Esophagus squamous epithelium (tissue), 5 donors: ENCODE measurements at regions of chr16 and their contacts with region 1.

Region 1: DNA sequence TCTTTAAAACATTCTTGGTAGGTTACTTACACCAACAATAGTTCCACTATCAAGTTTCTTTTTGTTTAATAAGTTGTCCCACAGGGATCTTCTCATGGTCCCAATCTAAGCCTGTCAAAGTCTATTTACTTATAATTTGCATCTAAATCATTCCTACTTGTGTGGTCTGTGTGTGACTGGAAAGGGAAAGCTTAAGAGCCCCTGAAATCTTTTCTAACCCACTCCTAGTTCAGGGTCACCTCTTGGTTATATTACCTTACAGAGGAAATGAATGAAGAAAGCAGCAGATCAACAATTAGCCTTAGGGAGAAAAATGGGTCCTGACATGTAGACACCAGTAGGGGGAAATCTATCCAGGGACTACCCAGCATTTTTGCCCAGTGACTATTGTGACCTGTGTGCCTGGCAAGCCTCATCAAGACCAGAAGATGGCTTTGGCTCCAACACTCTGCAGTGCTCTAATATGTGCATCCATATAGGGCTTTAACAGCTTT is 110.4 kb upstream of the HAS3 start:
- DNase-seq: no peak
- H3K4me3 ChIP-seq: no peak overlapping the region
- H3K27ac ChIP-seq: peak overlapping the region; percentile 49 to 61 (median 56)
- H3K4me1 ChIP-seq: peaks cover 0 to 58% (median 35%) of the 10 kb centered on the region in 3 donors
- H3K27me3 ChIP-seq: no peaks in the 10 kb centered on the region
- CTCF ChIP-seq: peak in 5 of 6 experiments; percentile 14 to 65 (median 34)
- POLR2A ChIP-seq: no peak

Region 2: DNA sequence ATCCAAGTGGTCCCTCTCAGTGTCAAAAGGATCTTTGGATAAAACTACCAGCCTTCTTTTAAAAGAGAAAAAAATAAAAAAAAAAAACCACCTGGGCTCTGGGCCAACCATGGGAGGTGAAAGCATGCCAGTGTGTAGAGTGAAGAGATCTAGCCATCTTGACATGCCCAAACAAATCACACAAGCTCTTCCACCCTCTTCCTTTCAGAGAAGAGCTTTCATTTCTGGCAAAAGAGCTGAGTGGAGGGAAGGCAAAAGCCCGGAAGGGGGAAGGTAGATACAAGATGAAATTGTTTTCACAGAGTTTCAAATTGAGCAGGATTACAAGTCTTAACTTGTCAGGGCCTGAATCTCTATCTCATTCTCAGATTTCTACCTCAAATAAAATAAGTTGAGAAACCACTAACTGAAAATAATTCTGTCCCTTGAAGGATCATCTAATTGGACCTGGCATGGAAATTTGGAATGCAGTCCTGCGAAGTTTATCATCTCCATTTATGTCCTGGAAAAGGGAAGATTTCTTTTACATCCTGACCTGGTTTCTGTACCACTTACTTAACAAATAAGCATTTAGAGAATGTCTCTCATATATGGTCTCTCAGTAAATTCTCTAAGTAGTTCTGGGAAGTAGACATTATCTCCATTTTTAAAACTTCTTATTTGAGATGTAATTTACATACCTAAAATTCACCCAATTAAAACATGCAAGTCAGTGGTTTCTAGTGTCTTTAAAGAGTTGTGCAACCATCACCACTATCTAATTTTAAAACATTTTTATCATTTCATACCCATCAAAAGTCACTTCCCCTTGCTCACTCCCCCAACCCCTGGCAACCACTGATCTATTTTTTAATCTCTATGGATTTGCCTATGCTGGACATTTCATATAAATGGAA is 58.1 kb before region 1 on chr16:
- intact Hi-C with region 1: no loop called
- DNase-seq: no peak
- H3K4me3 ChIP-seq: no peak overlapping the region
- H3K27ac ChIP-seq: peak overlapping the region; percentile 53 to 80 (median 68)
- H3K4me1 ChIP-seq: peaks cover 5 to 50% (median 8%) of the 10 kb centered on the region in 3 donors
- H3K27me3 ChIP-seq: no peaks in the 10 kb centered on the region
- CTCF ChIP-seq: no peak
- POLR2A ChIP-seq: no peak

Region 3: GRCh38 chr16:69105489-69106361 is 110.7 kb after region 1 on chr16 and contains the start of gene HAS3:
- intact Hi-C with region 1: loop called (anchors 10 kb)
- DNase-seq: no peak
- H3K4me3 ChIP-seq: peak within 1 kb of the TSS; percentile 60 to 80 (median 74)
- H3K27ac ChIP-seq: peak within 1 kb of the TSS; percentile 70 to 91 (median 76)
- H3K4me1 ChIP-seq: peaks cover 27 to 75% (median 48%) of the 10 kb centered on the region in 3 donors
- H3K27me3 ChIP-seq: peaks cover 0 to 22% (median 0%) of the 10 kb centered on the region in 4 donors
- CTCF ChIP-seq: peak in 5 of 6 experiments; percentile 14 to 60 (median 45)
- POLR2A ChIP-seq: peak in 2 of 4 donors; percentile 46 to 55
- total RNA-seq, gene HAS3: 15.8 to 103 (median 51.4) TPM